WTC11 (cell line): ENCODE measurements at regions of chr15 and their contacts with region 1.

Region 1: GRCh38 chr15:77496710-77497103 is 76.0 kb downstream of the HMG20A start:
- DNase-seq: peak; percentile 91
- ATAC-seq: peak; percentile 87
- H3K4me3 Mint-ChIP-seq: no peak overlapping the region
- H3K27ac Mint-ChIP-seq: peak overlapping the region; percentile 91
- H3K4me1 Mint-ChIP-seq: peaks cover 57% of the 10 kb centered on the region
- H3K27me3 Mint-ChIP-seq: no peaks in the 10 kb centered on the region; the same call in 1 of the 2 replicates
- CTCF ChIP-seq: peak; percentile 91

Region 2: GRCh38 chr15:77002954-77003912 is 493.5 kb before region 1 on chr15:
- CTCF ChIA-PET with region 1: no interaction called
- POLR2A ChIA-PET with region 1: no interaction called
- DNase-seq: no peak
- ATAC-seq: no peak
- H3K4me3 Mint-ChIP-seq: no peak overlapping the region
- H3K27ac Mint-ChIP-seq: no peak overlapping the region
- H3K4me1 Mint-ChIP-seq: no peaks in the 10 kb centered on the region
- H3K27me3 Mint-ChIP-seq: no peaks in the 10 kb centered on the region; the same call in 1 of the 2 replicates
- CTCF ChIP-seq: no peak

Region 3: GRCh38 chr15:77112838-77113504 is 383.7 kb before region 1 on chr15:
- CTCF ChIA-PET with region 1: interaction called, 49 read pairs
- POLR2A ChIA-PET with region 1: no interaction called
- DNase-seq: no peak
- ATAC-seq: peak; percentile 92
- H3K4me3 Mint-ChIP-seq: no peak overlapping the region
- H3K27ac Mint-ChIP-seq: no peak overlapping the region
- H3K4me1 Mint-ChIP-seq: peaks cover 3% of the 10 kb centered on the region; the same call in 1 of the 2 replicates
- H3K27me3 Mint-ChIP-seq: no peaks in the 10 kb centered on the region
- CTCF ChIP-seq: no peak

Region 4: DNA sequence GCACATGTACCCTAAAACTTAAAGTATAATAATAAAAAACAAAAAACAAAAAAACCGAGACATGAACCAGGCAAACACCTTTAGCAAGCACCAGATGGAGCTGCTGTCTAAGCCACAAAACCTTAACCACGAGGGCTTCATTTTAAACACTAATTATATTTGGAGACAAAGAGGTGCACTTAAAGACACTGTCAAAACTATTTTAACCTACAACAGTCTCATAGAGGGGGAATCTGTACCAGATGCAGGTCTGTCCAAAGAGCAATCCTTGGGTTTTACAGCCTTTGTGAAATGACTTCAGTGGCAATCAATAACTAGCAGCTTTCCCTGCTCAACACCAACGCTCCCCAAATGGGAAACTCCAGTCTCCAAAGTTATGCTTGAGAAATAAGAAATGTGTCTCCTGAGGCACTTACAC is 310.1 kb before region 1 on chr15:
- CTCF ChIA-PET with region 1: interaction called, 34 read pairs
- POLR2A ChIA-PET with region 1: no interaction called
- DNase-seq: no peak
- ATAC-seq: no peak
- H3K4me3 Mint-ChIP-seq: no peak overlapping the region
- H3K27ac Mint-ChIP-seq: no peak overlapping the region; the same call in 1 of the 2 replicates
- H3K4me1 Mint-ChIP-seq: peaks cover 2% of the 10 kb centered on the region; the same call in 1 of the 2 replicates
- H3K27me3 Mint-ChIP-seq: no peaks in the 10 kb centered on the region
- CTCF ChIP-seq: no peak

Region 5: GRCh38 chr15:77235566-77235965 is 261.1 kb before region 1 on chr15:
- CTCF ChIA-PET with region 1: no interaction called
- POLR2A ChIA-PET with region 1: no interaction called
- DNase-seq: no peak
- ATAC-seq: no peak
- H3K4me3 Mint-ChIP-seq: no peak overlapping the region
- H3K27ac Mint-ChIP-seq: no peak overlapping the region
- H3K4me1 Mint-ChIP-seq: no peaks in the 10 kb centered on the region
- H3K27me3 Mint-ChIP-seq: no peaks in the 10 kb centered on the region
- CTCF ChIP-seq: no peak

Region 6: DNA sequence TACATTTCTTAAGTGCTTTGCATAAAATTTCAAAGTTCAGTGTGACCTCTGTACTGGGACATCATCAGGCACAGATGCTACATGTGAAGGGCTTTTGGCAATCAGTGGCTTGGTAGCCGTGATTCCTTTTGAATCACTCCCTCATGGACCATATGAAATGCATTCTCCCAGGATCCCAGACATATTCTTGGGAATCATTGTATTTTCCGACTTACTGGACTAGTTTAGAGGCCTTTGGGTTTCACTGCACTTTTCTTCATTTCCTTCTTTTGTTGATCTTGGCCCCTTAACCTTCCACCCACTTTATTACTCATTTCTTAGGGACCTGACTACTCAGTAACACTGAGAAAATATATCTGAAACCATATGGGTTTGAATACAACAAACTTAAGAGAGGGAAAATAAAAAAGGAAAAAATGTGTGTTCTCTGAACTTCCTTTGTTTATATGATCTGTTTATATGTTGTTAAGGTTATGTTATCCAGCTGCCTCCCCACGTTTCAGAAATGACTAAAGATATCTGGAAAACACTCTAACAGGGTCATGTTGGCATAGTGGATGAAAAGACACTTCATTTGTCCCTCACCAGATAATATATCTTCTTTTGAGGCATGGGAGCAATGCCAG is 40.9 kb before region 1 on chr15:
- CTCF ChIA-PET with region 1: interaction called, 10 read pairs
- POLR2A ChIA-PET with region 1: no interaction called
- DNase-seq: no peak
- ATAC-seq: no peak
- H3K4me3 Mint-ChIP-seq: no peak overlapping the region
- H3K27ac Mint-ChIP-seq: no peak overlapping the region; the same call in 1 of the 2 replicates
- H3K4me1 Mint-ChIP-seq: peaks cover 14% of the 10 kb centered on the region
- H3K27me3 Mint-ChIP-seq: no peaks in the 10 kb centered on the region
- CTCF ChIP-seq: no peak

Region 7: DNA sequence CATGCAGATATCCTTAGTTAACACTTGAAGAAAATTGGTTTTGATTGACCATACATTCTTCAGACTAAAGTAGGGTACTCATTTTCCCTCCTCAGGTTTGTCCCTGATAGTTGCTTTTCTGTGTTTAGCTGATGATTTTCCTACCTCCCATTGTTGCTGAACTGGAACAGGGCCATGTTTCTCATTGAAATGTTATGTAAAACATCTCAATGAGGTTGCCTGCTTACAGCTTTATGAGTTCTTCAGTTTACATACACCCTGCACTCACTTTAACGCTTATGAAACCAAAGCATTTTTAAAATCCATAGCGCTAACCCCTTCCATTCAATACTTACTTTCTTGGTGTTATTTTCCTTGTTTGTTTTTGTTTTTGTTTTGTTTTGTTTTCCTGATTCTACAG is 14.1 kb before region 1 on chr15:
- CTCF ChIA-PET with region 1: interaction called, 12 read pairs
- POLR2A ChIA-PET with region 1: interaction called, 4 read pairs
- DNase-seq: no peak
- ATAC-seq: no peak
- H3K4me3 Mint-ChIP-seq: no peak overlapping the region
- H3K27ac Mint-ChIP-seq: peak overlapping the region; percentile 88
- H3K4me1 Mint-ChIP-seq: peaks cover 56% of the 10 kb centered on the region
- H3K27me3 Mint-ChIP-seq: no peaks in the 10 kb centered on the region
- CTCF ChIP-seq: no peak

Region 8: GRCh38 chr15:77514635-77515402 is 18.1 kb after region 1 on chr15:
- CTCF ChIA-PET with region 1: interaction called, 67 read pairs
- POLR2A ChIA-PET with region 1: no interaction called
- DNase-seq: no peak
- ATAC-seq: peak; percentile 33
- H3K4me3 Mint-ChIP-seq: no peak overlapping the region
- H3K27ac Mint-ChIP-seq: peak overlapping the region; percentile 26
- H3K4me1 Mint-ChIP-seq: peaks cover 71% of the 10 kb centered on the region
- H3K27me3 Mint-ChIP-seq: no peaks in the 10 kb centered on the region; the same call in 1 of the 2 replicates
- CTCF ChIP-seq: no peak

Region 9: GRCh38 chr15:77589839-77590238 is 93.1 kb after region 1 on chr15:
- CTCF ChIA-PET with region 1: no interaction called
- POLR2A ChIA-PET with region 1: no interaction called
- DNase-seq: no peak
- ATAC-seq: no peak
- H3K4me3 Mint-ChIP-seq: no peak overlapping the region
- H3K27ac Mint-ChIP-seq: peak overlapping the region; percentile 70; the same call in 1 of the 2 replicates
- H3K4me1 Mint-ChIP-seq: 0 out of 2 replicates have a peak, but pooled peaks cover 3% of the 10 kb centered on the region
- H3K27me3 Mint-ChIP-seq: no peaks in the 10 kb centered on the region; the same call in none of the 2 replicates
- CTCF ChIP-seq: no peak